SK-N-SH (cell line): ENCODE measurements at regions of chr2 and their contacts with region 1.

Region 1: GRCh38 chr2:134411828-134412638 is 158.2 kb downstream of the MGAT5 start:
- DNase-seq: peak; percentile 70
- H3K4me3 ChIP-seq: peak overlapping the region in 1 of 2 experiments; percentile 6; a peak in 1 of 4 replicates
- H3K27ac ChIP-seq: peak overlapping the region in 1 of 2 experiments; percentile 97; a peak in 2 of 4 replicates
- H3K4me1 ChIP-seq: peaks cover 33 to 43% of the 10 kb centered on the region in 2 experiments
- H3K27me3 ChIP-seq: no peaks in the 10 kb centered on the region
- CTCF ChIP-seq: peak; percentile 74
- EP300 ChIP-seq: no peak
- RAD21 ChIP-seq: peak; percentile 96

Region 2: DNA sequence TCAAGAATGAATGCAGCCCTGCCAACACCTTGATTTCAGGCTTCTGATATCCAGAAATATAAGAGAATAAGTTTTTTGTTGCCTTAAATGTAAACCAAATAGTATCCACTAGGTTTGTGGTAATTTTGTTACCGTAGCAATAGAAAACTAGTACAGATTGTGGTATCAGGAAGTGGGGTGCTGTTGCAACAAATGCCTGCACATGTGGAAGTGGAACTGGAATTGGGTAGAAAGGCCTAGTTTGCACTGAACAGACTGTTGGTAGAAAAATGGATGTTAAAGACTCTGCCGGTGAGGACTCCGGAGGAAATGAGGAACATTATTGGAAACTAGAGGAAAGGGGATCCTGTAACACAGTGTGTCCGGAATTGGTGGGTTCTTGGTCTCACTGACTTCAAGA is 303.9 kb before region 1 on chr2:
- CTCF ChIA-PET with region 1: interaction called, 10 read pairs
- POLR2A ChIA-PET with region 1: no interaction called
- DNase-seq: no peak
- H3K4me3 ChIP-seq: no peak overlapping the region
- H3K27ac ChIP-seq: no peak overlapping the region
- H3K4me1 ChIP-seq: no peaks in the 10 kb centered on the region
- H3K27me3 ChIP-seq: no peaks in the 10 kb centered on the region
- CTCF ChIP-seq: no peak
- EP300 ChIP-seq: no peak
- RAD21 ChIP-seq: no peak

Region 3: DNA sequence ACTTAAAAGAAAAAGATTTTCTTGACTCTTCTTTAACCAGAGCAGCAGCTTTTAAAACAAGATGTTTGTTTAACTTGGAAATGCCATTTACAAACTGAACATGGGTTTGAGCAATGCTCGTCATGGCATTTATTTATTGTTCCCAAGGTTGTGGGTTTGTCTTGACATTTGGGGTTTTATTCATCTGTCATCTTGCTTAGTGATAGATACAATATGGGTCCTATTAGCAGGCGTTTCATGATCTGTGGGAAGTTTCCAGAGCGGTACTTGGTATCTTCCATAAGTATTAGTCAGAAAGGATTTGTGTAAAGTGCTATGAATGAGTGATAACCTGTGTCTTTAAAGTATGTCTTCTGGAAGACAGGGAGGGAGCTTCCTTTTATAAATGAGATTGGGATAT is 188.0 kb before region 1 on chr2:
- CTCF ChIA-PET with region 1: interaction called, 10 read pairs
- POLR2A ChIA-PET with region 1: no interaction called
- DNase-seq: no peak
- H3K4me3 ChIP-seq: no peak overlapping the region
- H3K27ac ChIP-seq: no peak overlapping the region
- H3K4me1 ChIP-seq: peaks cover 0 to 13% of the 10 kb centered on the region in 2 experiments; a peak in 1 of 4 replicates
- H3K27me3 ChIP-seq: no peaks in the 10 kb centered on the region
- CTCF ChIP-seq: no peak
- EP300 ChIP-seq: no peak
- RAD21 ChIP-seq: no peak

Region 4: GRCh38 chr2:134320930-134321329 is 91.1 kb before region 1 on chr2:
- CTCF ChIA-PET with region 1: interaction called, 21 read pairs
- POLR2A ChIA-PET with region 1: no interaction called
- DNase-seq: no peak
- H3K4me3 ChIP-seq: no peak overlapping the region
- H3K27ac ChIP-seq: no peak overlapping the region
- H3K4me1 ChIP-seq: peaks cover 0 to 18% of the 10 kb centered on the region in 2 experiments; a peak in 2 of 4 replicates
- H3K27me3 ChIP-seq: no peaks in the 10 kb centered on the region
- CTCF ChIP-seq: no peak
- EP300 ChIP-seq: no peak
- RAD21 ChIP-seq: no peak

Region 5: GRCh38 chr2:134375935-134376334 is 36.1 kb before region 1 on chr2:
- CTCF ChIA-PET with region 1: interaction called, 25 read pairs
- POLR2A ChIA-PET with region 1: interaction called, 7 read pairs
- DNase-seq: peak; percentile 23
- H3K4me3 ChIP-seq: no peak overlapping the region
- H3K27ac ChIP-seq: peak overlapping the region in 1 of 2 experiments; percentile 34; a peak in 1 of 4 replicates
- H3K4me1 ChIP-seq: peaks cover 0 to 25% of the 10 kb centered on the region in 2 experiments; a peak in 1 of 4 replicates
- H3K27me3 ChIP-seq: no peaks in the 10 kb centered on the region
- CTCF ChIP-seq: peak; percentile 34; the same call in 1 of the 2 replicates
- EP300 ChIP-seq: no peak
- RAD21 ChIP-seq: peak; percentile 75

Region 6: DNA sequence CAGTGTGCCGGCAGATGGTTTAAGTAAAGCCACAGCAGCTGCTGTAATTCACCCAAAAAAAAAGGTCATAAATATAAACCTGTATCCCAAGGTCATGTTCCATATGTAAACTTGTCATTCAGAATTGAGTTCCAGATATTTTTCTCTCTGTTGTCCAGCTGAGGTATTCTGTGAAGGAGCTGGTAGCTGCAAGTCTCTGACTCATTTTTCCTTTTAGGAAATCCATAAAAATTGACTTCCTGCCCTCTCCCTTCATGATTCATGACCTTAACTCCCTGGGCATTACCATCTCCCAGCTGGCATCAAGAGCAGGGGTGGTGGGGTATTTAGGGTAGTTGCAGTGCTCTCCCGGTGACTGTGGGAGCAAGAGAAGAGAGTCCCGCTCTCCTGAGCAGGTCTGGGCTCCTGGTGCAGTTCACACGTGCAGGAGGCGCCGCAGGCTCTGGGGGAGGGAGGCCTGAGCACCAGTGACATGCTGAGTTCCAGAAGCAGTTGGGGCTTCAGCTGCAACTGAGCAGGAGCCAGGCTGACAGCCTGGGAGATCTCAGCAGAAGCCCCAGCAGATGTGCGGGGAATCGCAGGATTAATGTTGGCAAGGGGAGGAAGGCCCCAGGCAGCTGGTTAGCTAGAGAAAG is 34.5 kb after region 1 on chr2:
- CTCF ChIA-PET with region 1: interaction called, 63 read pairs
- POLR2A ChIA-PET with region 1: no interaction called
- DNase-seq: no peak
- H3K4me3 ChIP-seq: no peak overlapping the region
- H3K27ac ChIP-seq: no peak overlapping the region; a peak in 1 of 4 replicates
- H3K4me1 ChIP-seq: peaks cover 5 to 19% of the 10 kb centered on the region in 2 experiments; a peak in 1 of 4 replicates
- H3K27me3 ChIP-seq: no peaks in the 10 kb centered on the region
- CTCF ChIP-seq: no peak
- EP300 ChIP-seq: peak in 1 of 2 experiments; percentile 48; a peak in 1 of 4 replicates
- RAD21 ChIP-seq: no peak

Region 7: DNA sequence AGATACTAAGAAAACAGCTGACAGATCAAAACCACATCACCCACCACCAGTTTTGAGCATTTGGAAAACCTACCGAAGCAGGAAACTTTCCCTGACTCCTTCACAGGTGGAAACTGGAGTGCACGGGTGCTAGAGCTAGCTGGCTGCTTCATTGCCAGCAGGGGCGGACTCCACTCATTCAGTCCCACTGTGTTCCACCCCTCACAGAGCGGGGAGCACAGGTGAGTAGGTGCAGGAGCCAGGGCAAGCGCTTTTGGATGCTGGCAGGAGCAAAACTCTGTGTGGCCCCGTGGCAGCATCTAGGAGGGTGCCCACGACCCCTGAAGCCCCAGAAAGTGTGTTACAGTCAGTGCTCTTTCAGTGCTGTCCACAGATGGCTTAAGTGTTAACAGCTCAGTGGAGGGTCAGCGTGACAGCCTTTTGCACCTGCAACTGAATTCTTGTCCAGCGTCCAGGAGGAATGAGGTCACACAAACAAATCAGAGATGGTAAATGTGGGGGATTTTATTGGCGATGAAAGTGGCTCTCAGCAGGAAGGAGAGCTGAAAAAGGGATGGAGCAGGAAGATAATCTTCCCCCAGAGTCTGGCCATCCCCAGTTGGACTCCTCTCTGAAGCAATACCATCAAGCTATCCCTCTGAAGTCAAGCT is 235.7 kb after region 1 on chr2:
- CTCF ChIA-PET with region 1: no interaction called
- POLR2A ChIA-PET with region 1: no interaction called
- DNase-seq: no peak
- H3K4me3 ChIP-seq: no peak overlapping the region
- H3K27ac ChIP-seq: no peak overlapping the region
- H3K4me1 ChIP-seq: no peaks in the 10 kb centered on the region
- H3K27me3 ChIP-seq: no peaks in the 10 kb centered on the region
- CTCF ChIP-seq: no peak
- EP300 ChIP-seq: no peak
- RAD21 ChIP-seq: no peak

Region 8: GRCh38 chr2:134718817-134719814 is 307.1 kb after region 1 on chr2 and contains the start of gene TMEM163:
- CTCF ChIA-PET with region 1: no interaction called
- POLR2A ChIA-PET with region 1: no interaction called
- DNase-seq: no peak
- H3K4me3 ChIP-seq: peak within 1 kb of the TSS in 1 of 2 experiments; percentile 43; a peak in 2 of 4 replicates
- H3K27ac ChIP-seq: no peak within 1 kb of the TSS
- H3K4me1 ChIP-seq: peaks cover 0 to 5% of the 10 kb centered on the region in 2 experiments; a peak in 1 of 4 replicates
- H3K27me3 ChIP-seq: peaks cover 28% of the 10 kb centered on the region; the same call in 1 of the 2 replicates
- CTCF ChIP-seq: no peak
- EP300 ChIP-seq: no peak
- RAD21 ChIP-seq: no peak
- polyA plus RNA-seq, gene TMEM163: not detected in 2 replicates